CD4-positive, alpha-beta memory T cell (primary cell): ENCODE measurements at regions of chr10 and their contacts with region 1.

Region 1: GRCh38 chr10:35195361-35196306 is 69.0 kb downstream of the CREM start:
- DNase-seq: peak; percentile 88 to 97 (median 94)
- H3K4me3 ChIP-seq: peak overlapping the region; percentile 57 to 73
- H3K4me3 Mint-ChIP-seq: peak overlapping the region; percentile 75 to 91 (median 89)
- H3K27ac ChIP-seq: peak overlapping the region; percentile 93
- H3K27ac Mint-ChIP-seq: peak overlapping the region; percentile 91 to 100 (median 99)
- H3K4me1 ChIP-seq: peaks cover 25% of the 10 kb centered on the region
- H3K4me1 Mint-ChIP-seq: peaks cover 16 to 25% (median 17%) of the 10 kb centered on the region in 4 donors
- H3K27me3 ChIP-seq: no peaks in the 10 kb centered on the region
- H3K27me3 Mint-ChIP-seq: no peaks in the 10 kb centered on the region

Region 2: DNA sequence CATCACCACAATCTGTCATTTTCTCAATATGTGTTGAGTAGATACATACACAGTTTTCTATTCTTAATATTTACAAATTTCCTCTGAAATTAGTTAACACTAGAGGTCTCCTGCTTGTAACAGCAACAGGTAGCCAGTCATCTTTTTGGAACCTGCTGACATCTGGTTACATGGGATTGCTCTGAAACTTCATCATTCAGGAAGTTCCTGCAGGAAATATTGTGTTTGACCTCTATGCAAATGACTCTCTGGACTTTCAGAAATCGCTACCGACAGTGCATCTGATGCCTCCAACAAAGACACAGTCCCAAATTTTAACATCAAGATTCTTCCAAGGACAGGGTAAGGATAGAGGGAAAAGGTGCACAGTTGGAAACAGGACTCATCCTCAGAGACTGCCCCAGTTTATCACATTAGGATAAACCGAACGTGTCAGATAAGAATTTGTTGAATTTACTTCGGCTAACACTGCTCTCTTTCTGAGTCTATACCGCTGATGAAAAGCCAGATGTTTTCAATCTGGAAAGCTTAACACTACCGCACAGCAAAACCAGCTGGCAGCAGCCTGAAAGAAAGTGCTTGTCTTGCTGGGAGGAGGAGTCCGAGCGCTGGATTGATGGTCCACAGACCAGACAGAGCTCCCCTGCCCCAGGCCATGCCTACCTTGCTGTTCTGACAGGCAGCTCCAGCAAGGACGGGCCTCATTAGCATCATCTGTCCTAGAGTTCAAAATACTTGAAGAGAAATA is 1013.9 kb before region 1 on chr10:
- CTCF ChIA-PET with region 1: no interaction called
- POLR2A ChIA-PET with region 1: no interaction called
- intact Hi-C with region 1: no loop called
- DNase-seq: no peak
- H3K4me3 ChIP-seq: no peak overlapping the region
- H3K4me3 Mint-ChIP-seq: no peak overlapping the region
- H3K27ac ChIP-seq: no peak overlapping the region
- H3K27ac Mint-ChIP-seq: no peak overlapping the region
- H3K4me1 ChIP-seq: no peaks in the 10 kb centered on the region
- H3K4me1 Mint-ChIP-seq: no peaks in the 10 kb centered on the region
- H3K27me3 ChIP-seq: no peaks in the 10 kb centered on the region
- H3K27me3 Mint-ChIP-seq: peaks cover 0 to 2% of the 10 kb centered on the region in 2 donors

Region 3: DNA sequence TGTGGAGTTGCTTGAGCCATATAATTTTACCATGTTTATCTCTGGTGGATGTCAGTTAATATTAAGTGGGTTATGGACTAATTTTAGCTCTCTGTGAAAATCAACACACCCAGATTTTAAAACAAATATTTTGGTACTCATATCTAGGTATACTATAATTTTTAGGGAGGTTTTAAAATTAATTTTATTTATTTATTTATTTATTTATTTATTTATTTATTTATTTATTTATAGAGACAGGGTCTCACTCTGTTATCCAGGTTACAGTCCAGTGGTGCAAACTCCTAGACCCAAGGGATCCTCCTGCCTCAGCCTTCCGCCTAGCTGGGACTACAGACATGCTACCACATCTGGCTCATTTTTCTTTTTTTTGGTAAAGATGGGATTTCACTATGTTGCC is 76.3 kb before region 1 on chr10:
- CTCF ChIA-PET with region 1: interaction called, 242 read pairs
- POLR2A ChIA-PET with region 1: interaction called, 248 read pairs
- intact Hi-C with region 1: loop called (anchors 1 kb)
- DNase-seq: no peak
- H3K4me3 ChIP-seq: no peak overlapping the region
- H3K4me3 Mint-ChIP-seq: no peak overlapping the region
- H3K27ac ChIP-seq: no peak overlapping the region
- H3K27ac Mint-ChIP-seq: no peak overlapping the region
- H3K4me1 ChIP-seq: no peaks in the 10 kb centered on the region
- H3K4me1 Mint-ChIP-seq: peaks cover 0 to 2% (median under 1%) of the 10 kb centered on the region in 4 donors
- H3K27me3 ChIP-seq: no peaks in the 10 kb centered on the region
- H3K27me3 Mint-ChIP-seq: no peaks in the 10 kb centered on the region

Region 4: DNA sequence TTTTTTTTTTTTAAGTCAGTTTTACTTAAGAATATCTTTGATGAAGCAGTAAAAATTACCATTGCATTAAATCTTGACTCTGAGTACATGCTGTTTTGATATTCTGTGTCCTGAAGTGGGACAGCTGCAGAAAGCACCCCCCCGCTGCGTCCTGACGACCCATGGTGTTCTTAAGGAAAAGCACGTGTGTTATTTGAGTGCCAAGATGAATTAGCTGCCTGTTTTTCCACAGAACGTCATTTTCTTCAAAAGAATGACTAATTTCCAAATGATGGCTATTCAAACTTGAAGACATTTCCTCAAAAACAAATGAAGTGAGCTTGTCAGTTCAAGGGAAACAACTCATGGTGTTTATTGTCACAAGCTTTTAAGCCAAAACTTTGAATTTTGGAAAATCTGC is 23.1 kb before region 1 on chr10:
- CTCF ChIA-PET with region 1: interaction called, 18 read pairs
- POLR2A ChIA-PET with region 1: interaction called, 3 read pairs
- intact Hi-C with region 1: no loop called
- DNase-seq: no peak
- H3K4me3 ChIP-seq: no peak overlapping the region
- H3K4me3 Mint-ChIP-seq: no peak overlapping the region
- H3K27ac ChIP-seq: no peak overlapping the region
- H3K27ac Mint-ChIP-seq: no peak overlapping the region
- H3K4me1 ChIP-seq: no peaks in the 10 kb centered on the region
- H3K4me1 Mint-ChIP-seq: no peaks in the 10 kb centered on the region
- H3K27me3 ChIP-seq: no peaks in the 10 kb centered on the region
- H3K27me3 Mint-ChIP-seq: no peaks in the 10 kb centered on the region

Region 5: DNA sequence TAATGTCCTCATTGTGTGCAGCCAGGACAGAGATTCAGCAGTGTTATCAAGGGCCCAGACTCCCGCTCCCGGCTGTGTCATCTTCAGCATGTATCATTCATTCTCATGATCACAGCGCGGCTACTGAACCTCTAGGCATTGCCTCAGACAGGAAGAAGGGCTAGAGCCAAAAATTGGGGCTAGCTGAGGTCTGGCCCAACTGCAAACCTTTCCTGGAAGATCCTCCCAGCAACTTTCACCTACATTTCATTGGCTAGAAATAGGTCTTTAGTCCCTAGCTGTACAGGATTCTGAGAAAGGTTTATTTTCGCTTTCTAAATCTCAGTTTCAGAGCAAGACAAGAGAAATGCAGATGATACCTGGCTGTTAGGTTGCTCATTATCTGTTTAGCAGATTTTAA is 12.9 kb after region 1 on chr10:
- CTCF ChIA-PET with region 1: interaction called, 107 read pairs
- POLR2A ChIA-PET with region 1: interaction called, 15 read pairs
- intact Hi-C with region 1: loop called (anchors 1 kb)
- DNase-seq: peak; percentile 10 to 56 (median 24)
- H3K4me3 ChIP-seq: peak overlapping the region in 1 of 2 donors; percentile 20
- H3K4me3 Mint-ChIP-seq: peak overlapping the region; percentile 23 to 79 (median 74)
- H3K27ac ChIP-seq: peak overlapping the region; percentile 47
- H3K27ac Mint-ChIP-seq: peak overlapping the region; percentile 73 to 97 (median 93)
- H3K4me1 ChIP-seq: peaks cover 12% of the 10 kb centered on the region
- H3K4me1 Mint-ChIP-seq: peaks cover 12 to 24% (median 15%) of the 10 kb centered on the region in 4 donors
- H3K27me3 ChIP-seq: no peaks in the 10 kb centered on the region
- H3K27me3 Mint-ChIP-seq: no peaks in the 10 kb centered on the region

Region 6: DNA sequence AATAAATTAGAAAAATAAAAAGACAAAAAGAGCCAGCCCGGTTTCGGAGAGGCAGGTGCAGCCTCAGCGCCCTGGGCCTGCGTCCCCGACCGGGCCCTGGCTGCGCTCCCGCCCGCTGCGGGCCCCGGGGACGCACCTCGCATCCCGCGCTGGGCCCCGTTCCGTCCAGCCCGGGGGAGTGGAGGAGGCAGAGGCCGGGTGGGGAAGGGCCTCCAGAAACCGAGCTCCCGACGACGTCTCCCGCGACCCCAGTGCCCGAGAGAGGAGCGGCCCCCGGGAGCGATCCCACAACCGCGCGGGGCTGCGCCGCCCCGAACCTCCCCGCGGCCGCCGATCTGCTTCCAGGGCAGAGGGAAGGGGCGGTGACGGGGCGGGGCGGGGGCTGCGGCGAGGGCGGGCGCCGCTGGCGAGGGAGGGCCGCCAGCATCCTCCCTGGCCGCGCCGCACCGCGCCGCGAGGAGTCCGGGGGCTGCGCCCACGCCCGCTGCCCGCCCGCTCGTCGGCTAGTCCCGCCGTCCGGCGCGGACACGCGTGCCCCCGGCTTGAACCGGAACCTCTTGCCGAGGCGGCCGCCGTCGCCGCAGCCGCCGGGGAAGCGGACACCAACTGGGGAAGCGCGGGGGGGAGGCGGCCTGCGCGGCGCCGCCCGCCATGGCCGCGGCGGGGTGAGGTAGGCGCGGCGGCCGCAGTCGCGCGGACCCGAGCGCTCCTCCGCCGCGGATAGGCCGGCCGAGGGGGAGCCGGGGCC is 140.6 kb after region 1 on chr10 and contains the start of gene CCNY:
- CTCF ChIA-PET with region 1: no interaction called
- POLR2A ChIA-PET with region 1: interaction called, 4 read pairs
- intact Hi-C with region 1: loop called (anchors 2 kb)
- DNase-seq: peak; percentile 74 to 81 (median 77)
- H3K4me3 ChIP-seq: peak within 1 kb of the TSS; percentile 38 to 57
- H3K4me3 Mint-ChIP-seq: peak within 1 kb of the TSS; percentile 89 to 93 (median 91)
- H3K27ac ChIP-seq: peak within 1 kb of the TSS; percentile 76
- H3K27ac Mint-ChIP-seq: peak within 1 kb of the TSS; percentile 91 to 95 (median 92)
- H3K4me1 ChIP-seq: peaks cover 63% of the 10 kb centered on the region
- H3K4me1 Mint-ChIP-seq: peaks cover 49 to 80% (median 65%) of the 10 kb centered on the region in 4 donors
- H3K27me3 ChIP-seq: no peaks in the 10 kb centered on the region
- H3K27me3 Mint-ChIP-seq: no peaks in the 10 kb centered on the region
- total RNA-seq, gene CCNY: 65.9 to 66.7 TPM